SK-N-SH (cell line): ENCODE measurements at regions of chr6 and their contacts with region 1.

Region 1: DNA sequence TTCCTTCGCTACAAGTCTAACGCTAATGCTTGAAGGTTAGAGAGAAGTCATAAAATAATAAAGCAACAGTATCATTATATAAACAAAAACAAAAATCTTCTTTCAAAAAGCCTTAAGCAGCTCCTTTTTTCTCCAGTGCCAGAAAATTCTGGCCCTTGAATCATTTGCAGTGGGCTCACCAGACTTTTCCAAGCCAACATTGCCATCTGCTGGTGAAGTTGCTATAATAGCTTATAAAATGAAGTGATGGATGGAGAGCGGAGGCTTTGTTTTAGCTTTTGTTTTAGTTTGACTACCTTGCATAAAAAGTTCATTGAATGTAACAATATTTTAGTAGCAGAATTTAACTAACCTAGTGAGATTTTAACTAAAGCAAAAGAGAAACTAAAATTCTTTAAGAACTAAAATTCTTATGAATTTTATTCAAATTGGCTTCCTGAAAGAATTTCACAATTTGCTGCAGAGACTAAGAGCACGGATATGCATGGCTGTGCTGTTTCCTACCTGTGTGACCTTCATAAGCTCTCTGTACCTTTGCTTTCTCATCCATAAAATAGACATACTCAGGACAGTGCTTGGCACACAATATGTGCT is 44.8 kb upstream of the SLC2A12 start:
- DNase-seq: peak; percentile 69
- H3K4me3 ChIP-seq: no peak overlapping the region; a peak in 1 of 4 replicates
- H3K27ac ChIP-seq: no peak overlapping the region
- H3K4me1 ChIP-seq: peaks cover 0 to 11% of the 10 kb centered on the region in 2 experiments; a peak in 2 of 4 replicates
- H3K27me3 ChIP-seq: peaks cover 10% of the 10 kb centered on the region; the same call in 1 of the 2 replicates
- CTCF ChIP-seq: peak; percentile 81
- EP300 ChIP-seq: no peak
- RAD21 ChIP-seq: peak; percentile 95

Region 2: DNA sequence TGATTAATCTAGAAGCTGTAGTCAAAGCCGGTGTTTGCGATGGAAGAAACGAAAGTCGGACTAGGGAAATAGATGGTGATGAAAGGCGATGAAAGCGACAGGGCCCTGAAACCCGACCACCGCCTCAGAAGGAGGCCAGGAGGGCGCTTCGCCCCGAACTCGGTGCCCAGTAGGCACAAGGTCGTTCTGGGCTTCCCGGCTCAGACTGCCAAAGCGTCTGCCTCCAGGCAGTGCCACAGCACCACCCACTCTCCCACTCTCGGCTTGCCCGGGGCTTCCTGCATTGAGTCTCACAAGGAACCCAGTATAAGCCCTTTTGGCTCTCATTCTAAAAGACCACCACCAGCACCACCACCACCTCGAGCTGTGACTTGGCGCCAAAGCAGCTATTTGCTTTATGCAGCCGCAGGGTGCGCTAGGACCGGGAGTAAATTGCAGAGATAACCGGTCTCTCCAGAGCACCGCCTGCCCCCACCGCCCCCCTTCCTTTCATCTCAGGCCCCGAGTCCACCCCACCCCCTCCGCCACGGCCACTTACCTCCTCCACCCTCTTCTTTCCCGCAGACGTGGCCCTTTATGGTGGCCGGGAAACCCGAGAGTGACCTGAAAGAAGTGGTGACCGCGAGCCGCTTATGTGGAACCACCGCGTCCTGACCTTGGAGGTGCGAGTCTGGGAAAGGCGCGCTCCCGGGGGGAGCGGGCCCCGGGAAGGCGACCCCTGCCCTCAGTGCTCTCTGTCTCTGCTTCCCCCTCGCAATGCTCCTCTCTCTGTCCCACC is 205.9 kb before region 1 on chr6:
- CTCF ChIA-PET with region 1: interaction called, 11 read pairs
- POLR2A ChIA-PET with region 1: no interaction called
- DNase-seq: peak; percentile 59
- H3K4me3 ChIP-seq: peak overlapping the region in 1 of 2 experiments; percentile 9; a peak in 1 of 4 replicates
- H3K27ac ChIP-seq: no peak overlapping the region
- H3K4me1 ChIP-seq: peaks cover 0 to 8% of the 10 kb centered on the region in 2 experiments; a peak in 1 of 4 replicates
- H3K27me3 ChIP-seq: peaks cover 95% of the 10 kb centered on the region
- CTCF ChIP-seq: no peak
- EP300 ChIP-seq: no peak
- RAD21 ChIP-seq: no peak

Region 3: DNA sequence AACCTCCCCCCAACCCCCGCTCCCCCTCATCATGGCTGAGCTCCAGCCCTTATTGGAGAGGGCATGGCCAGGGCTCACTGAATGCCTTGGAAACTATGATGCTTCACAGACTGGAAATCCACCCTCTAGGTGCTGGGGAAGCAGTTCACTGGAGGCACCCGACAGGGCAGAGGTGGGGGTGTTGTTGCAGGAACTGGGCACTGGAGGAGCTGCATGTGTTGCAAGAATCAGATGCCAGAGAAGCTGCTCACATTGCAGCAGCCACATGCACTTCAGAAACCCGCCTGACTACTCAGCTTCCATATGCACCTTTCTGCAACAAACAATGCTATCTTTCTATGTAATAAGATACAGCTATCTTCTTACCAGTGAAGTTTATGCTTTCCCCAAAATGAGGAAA is 152.1 kb before region 1 on chr6:
- CTCF ChIA-PET with region 1: interaction called, 15 read pairs
- POLR2A ChIA-PET with region 1: no interaction called
- DNase-seq: no peak
- H3K4me3 ChIP-seq: no peak overlapping the region
- H3K27ac ChIP-seq: no peak overlapping the region
- H3K4me1 ChIP-seq: peaks cover 0 to 2% of the 10 kb centered on the region in 2 experiments; a peak in 1 of 4 replicates
- H3K27me3 ChIP-seq: peaks cover 4% of the 10 kb centered on the region; the same call in 1 of the 2 replicates
- CTCF ChIP-seq: no peak
- EP300 ChIP-seq: no peak
- RAD21 ChIP-seq: no peak

Region 4: GRCh38 chr6:134058622-134059366 is 38.4 kb before region 1 on chr6:
- CTCF ChIA-PET with region 1: interaction called, 45 read pairs
- POLR2A ChIA-PET with region 1: no interaction called
- DNase-seq: no peak
- H3K4me3 ChIP-seq: no peak overlapping the region
- H3K27ac ChIP-seq: no peak overlapping the region
- H3K4me1 ChIP-seq: peaks cover 3 to 16% of the 10 kb centered on the region in 2 experiments; a peak in 2 of 4 replicates
- H3K27me3 ChIP-seq: no peaks in the 10 kb centered on the region
- CTCF ChIP-seq: no peak
- EP300 ChIP-seq: no peak
- RAD21 ChIP-seq: no peak

Region 5: GRCh38 chr6:134111062-134111677 is 14.0 kb after region 1 on chr6:
- CTCF ChIA-PET with region 1: interaction called, 18 read pairs
- POLR2A ChIA-PET with region 1: no interaction called
- DNase-seq: peak; percentile 64
- H3K4me3 ChIP-seq: peak overlapping the region in 1 of 2 experiments; percentile 57; a peak in 1 of 4 replicates
- H3K27ac ChIP-seq: no peak overlapping the region
- H3K4me1 ChIP-seq: no peaks in the 10 kb centered on the region
- H3K27me3 ChIP-seq: no peaks in the 10 kb centered on the region; the same call in 1 of the 2 replicates
- CTCF ChIP-seq: peak; percentile 90
- EP300 ChIP-seq: no peak
- RAD21 ChIP-seq: peak; percentile 42; the same call in 1 of the 2 replicates